Dorsolateral prefrontal cortex (tissue), 120 donors: ENCODE measurements at regions of chr6 and their contacts with region 1.

Region 1: GRCh38 chr6:170243791-170244291 is 47.0 kb downstream of the DLL1 start:
- DNase-seq: peak; percentile 54 to 74 (median 60)
- H3K4me3 ChIP-seq: peak overlapping the region in 43 of 59 donors; percentile 1 to 56 (median 34)
- H3K27ac ChIP-seq: peak overlapping the region in 55 of 59 donors; percentile 18 to 89 (median 69)
- H3K27me3 ChIP-seq: peaks cover 0 to 2% (median 0%) of the 10 kb centered on the region in 45 donors
- CTCF ChIP-seq: peak in 10 of 56 donors; percentile 13 to 34 (median 22)

Region 2: DNA sequence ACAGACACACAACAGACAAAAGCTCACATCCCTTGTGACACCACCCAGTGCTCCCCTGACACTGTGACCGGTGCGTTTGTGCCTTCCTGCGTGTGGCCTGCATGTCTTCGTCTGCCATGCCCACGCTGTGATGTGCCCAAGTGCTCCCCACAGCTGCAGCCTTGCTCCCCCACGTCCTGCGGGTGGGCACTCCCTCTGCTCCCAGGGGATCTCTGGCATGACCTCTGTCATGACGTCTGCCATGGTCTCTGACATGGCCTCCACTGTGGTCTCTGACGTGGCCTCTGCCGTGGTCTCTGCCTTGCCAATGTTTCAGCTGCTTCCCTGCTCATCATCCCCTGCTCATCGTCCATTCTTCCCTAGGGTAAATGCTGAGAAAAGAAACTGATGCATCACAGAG is 153.9 kb before region 1 on chr6:
- intact Hi-C with region 1: no loop called
- DNase-seq: peak in 4 of 10 donors; percentile 10 to 33 (median 20)
- H3K4me3 ChIP-seq: no peak overlapping the region
- H3K27ac ChIP-seq: no peak overlapping the region
- H3K27me3 ChIP-seq: no peaks in the 10 kb centered on the region
- CTCF ChIP-seq: no peak

Region 3: DNA sequence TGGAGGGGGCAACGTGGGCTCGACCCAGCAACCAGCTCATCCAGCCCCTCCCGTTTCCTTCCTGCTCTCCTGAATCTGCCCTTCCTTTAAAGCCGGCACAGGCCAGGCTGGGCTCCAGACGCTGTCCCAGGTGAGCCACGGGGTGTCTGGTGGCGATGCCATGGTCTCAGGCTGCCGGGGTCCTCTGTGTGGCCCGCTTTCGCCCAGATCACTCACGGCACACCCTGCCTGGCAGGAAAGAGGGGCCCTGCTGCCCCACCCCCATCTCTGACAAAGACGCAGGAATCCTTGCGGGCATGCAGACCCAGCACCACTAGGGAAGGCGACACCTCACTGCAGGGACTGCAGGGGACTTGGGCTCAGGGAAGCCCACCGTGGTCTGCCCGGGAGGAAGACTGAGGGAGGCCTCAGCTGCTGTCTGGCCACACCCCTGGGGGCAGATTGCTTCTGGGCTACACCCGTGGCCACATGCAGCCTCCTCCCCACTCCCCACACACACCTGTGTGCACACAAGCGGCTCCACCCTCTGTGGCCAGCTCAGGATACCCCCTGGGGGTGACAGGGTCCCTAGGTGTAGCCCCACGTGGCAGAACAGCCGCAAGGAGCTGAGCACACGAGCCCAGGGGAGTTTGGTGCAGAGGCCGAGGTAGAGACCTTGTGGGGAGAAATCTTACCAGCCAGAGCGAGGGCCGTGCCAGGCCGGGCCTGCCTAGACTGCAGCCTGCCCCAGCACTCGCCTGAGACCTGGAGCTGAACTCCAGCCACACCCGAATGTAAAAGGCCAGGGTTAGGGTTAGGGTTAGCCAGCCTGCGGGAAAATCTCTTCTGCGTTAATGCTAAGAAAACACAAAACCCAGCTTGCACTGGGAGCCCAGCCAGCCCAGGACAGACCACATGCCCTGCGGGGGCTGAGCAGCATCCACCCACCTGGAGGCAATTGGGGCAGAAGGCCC is 57.6 kb before region 1 on chr6:
- intact Hi-C with region 1: loop called in 1 of 2 experiments (anchors 10 kb)
- DNase-seq: no peak
- H3K4me3 ChIP-seq: peak overlapping the region in 9 of 59 donors; percentile 6 to 54 (median 30)
- H3K27ac ChIP-seq: peak overlapping the region in 25 of 59 donors; percentile 41 to 97 (median 75)
- H3K27me3 ChIP-seq: peaks cover 0 to 3% (median 0%) of the 10 kb centered on the region in 45 donors
- CTCF ChIP-seq: no peak

Region 4: GRCh38 chr6:170286246-170286933 is 42.5 kb after region 1 on chr6:
- intact Hi-C with region 1: loop called in 1 of 2 experiments (anchors 1 kb)
- DNase-seq: peak in 9 of 10 donors; percentile 67 to 90 (median 76)
- H3K4me3 ChIP-seq: peak overlapping the region in 37 of 59 donors; percentile 9 to 92 (median 78)
- H3K27ac ChIP-seq: peak overlapping the region in 57 of 59 donors; percentile 26 to 98 (median 86)
- H3K27me3 ChIP-seq: peaks cover 0 to 23% (median 2%) of the 10 kb centered on the region in 45 donors
- CTCF ChIP-seq: peak in 1 of 56 donors; percentile 20

Region 5: GRCh38 chr6:170306324-170307079 is 62.7 kb after region 1 on chr6 and contains the start of gene FAM120B:
- intact Hi-C with region 1: no loop called
- DNase-seq: peak; percentile 95 to 99 (median 97)
- H3K4me3 ChIP-seq: peak within 1 kb of the TSS; percentile 69 to 100 (median 95)
- H3K27ac ChIP-seq: peak within 1 kb of the TSS in 58 of 59 donors; percentile 21 to 94 (median 82)
- H3K27me3 ChIP-seq: no peaks in the 10 kb centered on the region
- CTCF ChIP-seq: peak in 23 of 56 donors; percentile 7 to 57 (median 26)
- total RNA-seq, gene FAM120B: 37.3 to 72.0 (median 55.7) TPM

Region 6: DNA sequence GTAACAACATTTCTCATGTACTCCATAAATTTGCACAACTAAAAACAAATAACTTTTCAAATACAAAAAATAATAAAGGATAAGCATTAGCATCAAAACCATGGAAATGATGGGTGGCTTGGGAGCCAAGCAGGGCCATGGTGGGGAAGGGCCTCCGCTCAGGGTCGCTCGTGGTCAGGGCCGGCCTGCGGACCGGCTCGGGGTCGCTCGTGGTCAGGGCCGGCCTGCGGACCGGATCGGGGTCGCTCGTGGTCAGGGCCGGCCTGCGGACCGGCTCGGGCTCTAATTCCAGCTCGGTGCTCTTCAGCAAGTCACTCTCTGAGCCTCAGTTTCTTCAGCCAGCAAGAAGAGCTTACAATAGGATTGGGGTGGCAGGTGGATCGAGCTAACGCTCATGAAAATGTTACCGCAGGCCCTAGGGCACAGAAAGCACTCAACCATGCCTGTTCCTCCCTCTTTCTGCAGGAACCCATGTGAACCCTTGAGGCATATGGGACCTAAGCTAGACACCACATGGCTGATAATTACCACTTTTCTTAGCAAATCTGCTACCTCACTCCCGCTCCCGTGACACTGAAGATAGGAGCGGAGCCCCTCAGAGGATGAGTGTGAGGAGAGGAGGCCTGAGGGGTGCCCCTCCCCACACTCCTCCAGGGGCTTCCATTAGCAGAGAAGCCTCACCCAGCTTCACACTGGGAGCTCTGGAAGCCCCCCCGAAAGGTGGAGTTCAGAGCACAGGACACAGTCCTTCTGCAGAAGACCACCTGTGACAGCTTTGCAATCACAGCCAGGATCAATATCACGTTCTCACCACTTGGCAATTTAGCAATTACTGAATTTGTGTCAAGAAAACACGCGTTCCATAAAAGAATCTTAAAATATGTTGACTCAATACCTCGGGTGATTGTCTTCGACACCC is 206.3 kb after region 1 on chr6:
- intact Hi-C with region 1: no loop called
- DNase-seq: peak in 1 of 10 donors; percentile 28
- H3K4me3 ChIP-seq: no peak overlapping the region
- H3K27ac ChIP-seq: no peak overlapping the region
- H3K27me3 ChIP-seq: no peaks in the 10 kb centered on the region
- CTCF ChIP-seq: no peak